ENCODE measurements at regions of chr1 and their contacts with region 1.

Region 1: GRCh38 chr1:1959840-1960479 is 40.9 kb upstream of the TMEM52 start:
- DNase-seq: peak; percentile 84
- CTCF ChIP-seq: peak; percentile 79

Region 2: DNA sequence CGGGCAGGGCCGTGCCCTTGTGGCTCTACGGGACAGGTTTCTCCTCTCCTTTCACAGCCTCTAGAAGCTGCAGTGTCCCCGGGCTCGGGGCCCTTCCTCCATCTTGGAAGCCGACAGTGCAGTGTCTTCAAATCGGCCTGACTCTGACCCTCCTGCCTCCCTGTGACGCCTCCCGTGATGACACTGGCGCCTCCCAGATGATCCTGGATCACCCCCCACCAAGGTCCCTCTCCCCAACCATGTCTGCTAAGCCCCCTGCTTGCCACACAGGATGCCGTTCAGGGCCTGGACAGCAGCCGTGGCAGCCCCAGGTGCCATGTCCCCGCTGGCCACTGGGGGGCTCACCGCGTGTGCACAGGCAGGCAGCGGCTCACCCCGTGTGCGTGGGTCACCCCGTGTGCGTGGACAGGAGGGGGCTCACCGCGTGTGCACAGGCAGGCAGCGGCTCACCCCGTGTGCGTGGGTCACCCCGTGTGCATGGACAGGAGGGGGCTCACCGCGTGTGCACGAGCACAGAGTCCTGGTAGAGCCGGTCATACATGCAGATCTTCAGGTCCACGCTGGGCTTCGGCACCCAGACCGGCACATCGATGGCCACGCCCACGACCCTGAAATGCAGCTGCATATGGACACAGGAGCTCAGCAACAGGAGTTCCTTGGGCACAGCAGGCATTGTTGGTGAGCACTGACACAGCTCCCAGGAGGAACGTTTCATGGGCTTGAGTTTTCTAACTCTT is 16.0 kb before region 1 on chr1:
- CTCF ChIA-PET with region 1: interaction called, 11 read pairs
- POLR2A ChIA-PET with region 1: no interaction called
- DNase-seq: peak; percentile 75
- CTCF ChIP-seq: peak; percentile 81